ENCODE measurements at regions of chr10 and their contacts with region 1.

Region 1: GRCh38 chr10:17643755-17644484 is at the start of gene STAM:
- DNase-seq: peak; percentile 93
- H3K4me3 Mint-ChIP-seq: peak within 1 kb of the TSS; percentile 100
- H3K27ac Mint-ChIP-seq: peak within 1 kb of the TSS; percentile 98
- H3K4me1 Mint-ChIP-seq: peaks cover 58% of the 10 kb centered on the region
- H3K27me3 Mint-ChIP-seq: no peaks in the 10 kb centered on the region
- total RNA-seq, gene STAM: 39.8 to 39.9 TPM

Region 2: GRCh38 chr10:17425584-17426262 is 218.2 kb before region 1 on chr10:
- CTCF ChIA-PET with region 1: interaction called, 3 read pairs
- POLR2A ChIA-PET with region 1: interaction called, 15 read pairs
- DNase-seq: peak; percentile 66
- H3K4me3 Mint-ChIP-seq: no peak overlapping the region
- H3K27ac Mint-ChIP-seq: peak overlapping the region; percentile 92
- H3K4me1 Mint-ChIP-seq: peaks cover 76% of the 10 kb centered on the region
- H3K27me3 Mint-ChIP-seq: peaks cover 1% of the 10 kb centered on the region

Region 3: DNA sequence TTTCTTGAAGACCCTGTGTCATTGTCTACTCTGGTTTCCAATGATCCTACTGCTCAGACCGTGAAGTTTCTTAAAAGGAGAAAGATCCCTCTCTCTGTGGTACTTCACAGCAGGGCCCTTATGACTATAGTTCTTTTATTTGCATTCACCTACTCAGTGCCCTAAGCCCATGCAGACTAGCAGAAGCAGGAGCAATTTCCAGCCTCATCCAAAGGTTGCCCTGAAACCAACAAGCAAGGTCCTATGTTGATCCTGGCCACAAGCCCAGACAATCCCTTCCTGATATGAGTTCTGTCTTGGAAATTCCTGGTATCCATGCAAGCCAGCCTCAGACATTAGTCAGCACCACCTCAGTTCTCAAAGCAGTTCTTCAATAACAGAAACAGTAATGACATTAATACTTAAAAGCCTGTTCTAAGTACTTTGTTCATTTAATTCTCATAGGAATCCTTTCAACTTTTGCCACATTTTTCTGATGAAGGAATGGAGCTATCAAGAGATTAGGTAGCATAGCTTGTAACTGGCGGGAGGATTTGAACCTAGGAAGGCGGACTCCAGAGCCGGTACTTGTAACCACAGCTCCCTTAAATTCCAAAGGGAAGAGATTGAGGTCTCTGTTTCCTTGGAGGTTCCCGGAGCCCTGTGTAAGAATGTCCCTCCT is 131.4 kb before region 1 on chr10:
- CTCF ChIA-PET with region 1: no interaction called
- POLR2A ChIA-PET with region 1: interaction called, 31 read pairs
- DNase-seq: no peak
- H3K4me3 Mint-ChIP-seq: no peak overlapping the region
- H3K27ac Mint-ChIP-seq: peak overlapping the region; percentile 59
- H3K4me1 Mint-ChIP-seq: peaks cover 55% of the 10 kb centered on the region
- H3K27me3 Mint-ChIP-seq: no peaks in the 10 kb centered on the region

Region 4: GRCh38 chr10:17533731-17534130 is 110.2 kb before region 1 on chr10:
- CTCF ChIA-PET with region 1: no interaction called
- POLR2A ChIA-PET with region 1: no interaction called
- DNase-seq: no peak
- H3K4me3 Mint-ChIP-seq: no peak overlapping the region
- H3K27ac Mint-ChIP-seq: no peak overlapping the region
- H3K4me1 Mint-ChIP-seq: no peaks in the 10 kb centered on the region
- H3K27me3 Mint-ChIP-seq: peaks cover 9% of the 10 kb centered on the region

Region 5: GRCh38 chr10:17655567-17656146 is 11.7 kb after region 1 on chr10:
- CTCF ChIA-PET with region 1: interaction called, 11 read pairs
- POLR2A ChIA-PET with region 1: interaction called, 60 read pairs
- DNase-seq: no peak
- H3K4me3 Mint-ChIP-seq: peak overlapping the region; percentile 3
- H3K27ac Mint-ChIP-seq: peak overlapping the region; percentile 51
- H3K4me1 Mint-ChIP-seq: peaks cover 64% of the 10 kb centered on the region
- H3K27me3 Mint-ChIP-seq: no peaks in the 10 kb centered on the region

Region 6: GRCh38 chr10:17685233-17685840 is 41.4 kb after region 1 on chr10:
- CTCF ChIA-PET with region 1: no interaction called
- POLR2A ChIA-PET with region 1: interaction called, 17 read pairs
- DNase-seq: peak; percentile 26
- H3K4me3 Mint-ChIP-seq: no peak overlapping the region
- H3K27ac Mint-ChIP-seq: peak overlapping the region; percentile 64
- H3K4me1 Mint-ChIP-seq: peaks cover 42% of the 10 kb centered on the region
- H3K27me3 Mint-ChIP-seq: no peaks in the 10 kb centered on the region

Region 7: GRCh38 chr10:18059826-18060559 is 416.1 kb after region 1 on chr10:
- CTCF ChIA-PET with region 1: no interaction called
- POLR2A ChIA-PET with region 1: no interaction called
- DNase-seq: no peak
- H3K4me3 Mint-ChIP-seq: no peak overlapping the region
- H3K27ac Mint-ChIP-seq: no peak overlapping the region
- H3K4me1 Mint-ChIP-seq: no peaks in the 10 kb centered on the region
- H3K27me3 Mint-ChIP-seq: no peaks in the 10 kb centered on the region

Measured in activated CD4-positive, alpha-beta memory T cell treated with anti-CD3 and anti-CD28 coated beads, Interleukin-2, amount 10 ng/mL, durations not matched to agents 7 days and 5 days (primary cell).